ENCODE measurements at regions of chr2 and their contacts with region 1.

Region 1: DNA sequence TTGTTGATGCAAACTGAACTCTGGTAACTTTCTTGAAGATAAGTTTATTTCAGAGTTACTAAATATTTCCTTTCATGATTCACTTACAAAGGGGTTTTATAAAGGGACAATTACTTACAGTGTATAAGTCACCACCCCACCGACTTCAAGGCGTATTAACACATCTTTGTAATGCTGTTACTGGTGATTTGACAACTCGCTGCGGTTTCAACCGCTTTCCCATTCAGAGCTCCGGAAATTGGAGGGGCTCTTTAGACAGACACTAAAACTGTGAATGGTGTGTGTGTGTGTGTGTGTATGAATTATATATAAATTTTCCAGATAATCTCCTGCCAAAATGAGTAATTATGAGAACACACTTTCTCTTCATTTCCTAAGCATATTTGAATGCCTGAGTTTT is 4.9 kb downstream of the TM4SF20 start:
- DNase-seq: no peak
- H3K4me3 ChIP-seq: no peak overlapping the region
- H3K27ac ChIP-seq: no peak overlapping the region
- H3K4me1 ChIP-seq: peaks cover 0 to 6% (median 0%) of the 10 kb centered on the region in 4 experiments; a peak in 1 of 7 replicates
- H3K27me3 ChIP-seq: peaks cover 0 to 2% (median 0%) of the 10 kb centered on the region in 4 experiments; a peak in 1 of 7 replicates
- CTCF ChIP-seq: no peak
- EP300 ChIP-seq: no peak
- POLR2A ChIP-seq: no peak
- RAD21 ChIP-seq: no peak

Region 2: GRCh38 chr2:227388537-227389011 is 14.4 kb after region 1 on chr2:
- CTCF ChIA-PET with region 1: interaction called, 66 read pairs
- POLR2A ChIA-PET with region 1: interaction called, 10 read pairs
- DNase-seq: no peak
- H3K4me3 ChIP-seq: no peak overlapping the region
- H3K27ac ChIP-seq: no peak overlapping the region
- H3K4me1 ChIP-seq: no peaks in the 10 kb centered on the region; a peak in 1 of 7 replicates
- H3K27me3 ChIP-seq: no peaks in the 10 kb centered on the region
- CTCF ChIP-seq: no peak
- EP300 ChIP-seq: no peak
- POLR2A ChIP-seq: no peak
- RAD21 ChIP-seq: no peak

Region 3: GRCh38 chr2:227430639-227431038 is 56.5 kb after region 1 on chr2:
- CTCF ChIA-PET with region 1: no interaction called
- POLR2A ChIA-PET with region 1: no interaction called
- DNase-seq: no peak
- H3K4me3 ChIP-seq: no peak overlapping the region
- H3K27ac ChIP-seq: no peak overlapping the region
- H3K4me1 ChIP-seq: no peaks in the 10 kb centered on the region
- H3K27me3 ChIP-seq: no peaks in the 10 kb centered on the region
- CTCF ChIP-seq: no peak
- EP300 ChIP-seq: no peak
- POLR2A ChIP-seq: no peak
- RAD21 ChIP-seq: no peak

Measured in H1 (cell line).